Left cardiac atrium (tissue), 4 donors: ENCODE measurements at regions of chr17 and their contacts with region 1.

Region 1: DNA sequence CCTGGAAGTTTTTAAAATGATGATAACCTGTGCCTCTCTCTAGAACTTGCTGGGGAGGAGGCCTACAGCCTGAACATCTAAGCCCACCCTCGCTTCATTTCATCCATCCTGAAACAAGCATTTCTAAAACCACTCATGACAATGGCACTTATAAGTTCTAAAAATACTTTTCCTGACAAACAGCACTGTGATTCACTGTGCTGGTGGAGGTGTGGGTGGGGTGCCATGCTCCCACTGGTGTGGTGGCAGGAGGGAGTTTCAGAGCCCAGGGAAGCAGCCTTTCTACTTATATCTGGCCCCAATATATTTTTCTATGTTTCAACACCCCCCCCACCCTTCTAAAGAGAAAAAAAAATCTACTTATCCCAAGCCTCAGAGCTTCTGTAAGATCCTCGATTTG is 52.6 kb downstream of the RAB11FIP4 start:
- DNase-seq: no peak
- ATAC-seq: peak in 1 of 2 donors; percentile 59

Region 2: GRCh38 chr17:31394544-31394943 is 49.5 kb before region 1 on chr17:
- intact Hi-C with region 1: loop called in 1 of 2 experiments (anchors 5 kb)
- DNase-seq: peak; percentile 73
- ATAC-seq: peak; percentile 39 to 80

Region 3: DNA sequence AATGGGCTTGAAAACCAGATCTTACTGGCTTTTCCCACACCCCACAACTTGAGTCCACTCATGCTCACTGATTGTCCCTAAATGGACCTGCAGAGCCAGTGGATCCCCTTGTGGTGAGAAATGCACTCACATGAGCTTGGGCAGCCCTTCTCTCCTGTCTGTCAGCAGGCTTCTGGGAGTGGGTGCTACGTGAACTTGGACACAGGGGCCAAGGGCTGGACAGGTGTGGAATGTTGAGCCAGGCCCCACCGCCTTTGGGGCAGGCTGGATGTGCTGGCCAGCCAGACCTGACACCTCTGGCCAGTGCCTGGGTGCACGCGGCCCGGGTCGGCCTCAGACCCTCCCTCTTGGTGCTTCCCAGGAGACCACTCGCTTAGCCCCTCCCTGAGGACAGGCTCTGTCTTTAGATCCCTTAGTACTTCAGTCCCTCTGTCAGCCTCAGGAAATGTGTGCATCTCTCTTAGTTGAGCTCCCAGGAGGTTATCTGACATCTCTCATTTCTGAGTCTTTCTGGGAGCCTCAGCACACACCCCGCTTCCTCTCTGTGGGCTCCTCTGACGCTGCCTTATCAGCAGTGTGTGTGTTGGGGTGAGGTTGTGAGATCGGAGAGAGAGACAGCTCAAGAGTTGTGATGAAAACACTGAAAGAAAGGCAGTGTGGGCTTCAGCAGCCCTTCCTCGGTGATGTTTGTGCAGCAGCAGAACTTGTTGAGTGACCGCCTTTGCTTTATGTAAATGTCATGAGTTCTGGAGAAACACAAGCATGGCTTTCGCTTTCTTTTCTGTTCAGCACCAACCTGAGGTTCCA is 64.5 kb after region 1 on chr17:
- intact Hi-C with region 1: no loop called
- DNase-seq: no peak
- ATAC-seq: peak; percentile 21 to 35